Endothelial cell of umbilical vein (primary cell): ENCODE measurements at regions of chr12 and their contacts with region 1.

Region 1: GRCh38 chr12:25924491-25925463 is 33.7 kb upstream of the RASSF8 start:
- DNase-seq: peak; percentile 93
- H3K4me3 ChIP-seq: no peak overlapping the region
- H3K27ac ChIP-seq: peak overlapping the region; percentile 73
- H3K4me1 ChIP-seq: peaks cover 21% of the 10 kb centered on the region
- H3K27me3 ChIP-seq: no peaks in the 10 kb centered on the region
- CTCF ChIP-seq: peak in 1 of 2 donors; percentile 9
- POLR2A ChIP-seq: no peak

Region 2: GRCh38 chr12:25789541-25789944 is 135.2 kb before region 1 on chr12:
- CTCF ChIA-PET with region 1: no interaction called
- POLR2A ChIA-PET with region 1: no interaction called
- dilution Hi-C with region 1: no loop called
- intact Hi-C with region 1: loop called (anchors 5 kb)
- DNase-seq: peak; percentile 83
- H3K4me3 ChIP-seq: no peak overlapping the region
- H3K27ac ChIP-seq: no peak overlapping the region
- H3K4me1 ChIP-seq: peaks cover 49% of the 10 kb centered on the region
- H3K27me3 ChIP-seq: no peaks in the 10 kb centered on the region
- CTCF ChIP-seq: no peak
- POLR2A ChIP-seq: no peak

Region 3: GRCh38 chr12:25817166-25817565 is 107.6 kb before region 1 on chr12:
- CTCF ChIA-PET with region 1: no interaction called
- POLR2A ChIA-PET with region 1: no interaction called
- dilution Hi-C with region 1: no loop called
- intact Hi-C with region 1: loop called (anchors 5 kb)
- DNase-seq: no peak
- H3K4me3 ChIP-seq: no peak overlapping the region
- H3K27ac ChIP-seq: no peak overlapping the region
- H3K4me1 ChIP-seq: peaks cover 16% of the 10 kb centered on the region
- H3K27me3 ChIP-seq: no peaks in the 10 kb centered on the region
- CTCF ChIP-seq: no peak
- POLR2A ChIP-seq: no peak

Region 4: GRCh38 chr12:25840678-25841465 is 83.9 kb before region 1 on chr12:
- CTCF ChIA-PET with region 1: no interaction called
- POLR2A ChIA-PET with region 1: no interaction called
- dilution Hi-C with region 1: no loop called
- intact Hi-C with region 1: loop called (anchors 5 kb)
- DNase-seq: peak; percentile 81
- H3K4me3 ChIP-seq: no peak overlapping the region
- H3K27ac ChIP-seq: peak overlapping the region; percentile 44
- H3K4me1 ChIP-seq: peaks cover 18% of the 10 kb centered on the region
- H3K27me3 ChIP-seq: no peaks in the 10 kb centered on the region
- CTCF ChIP-seq: no peak
- POLR2A ChIP-seq: no peak

Region 5: DNA sequence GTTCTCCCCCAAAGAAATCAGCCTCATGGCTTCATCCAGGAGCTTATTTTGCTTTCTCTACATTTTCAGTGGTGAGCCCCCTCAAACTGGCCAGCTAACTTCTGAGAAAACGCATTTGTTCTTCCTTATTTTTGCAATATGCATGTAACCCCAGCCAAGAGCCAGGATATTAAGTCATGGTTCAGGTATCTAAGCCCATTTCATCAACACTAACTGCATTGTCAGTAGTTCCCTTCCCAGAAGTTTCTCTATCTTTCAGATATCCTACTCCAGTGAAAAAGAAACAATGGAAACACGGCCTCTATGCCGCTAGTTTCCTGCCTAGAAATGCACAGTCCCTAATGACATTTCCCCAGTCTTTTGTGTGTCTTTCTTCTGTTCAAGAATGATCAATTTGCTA is 69.1 kb before region 1 on chr12:
- CTCF ChIA-PET with region 1: no interaction called
- POLR2A ChIA-PET with region 1: no interaction called
- dilution Hi-C with region 1: no loop called
- intact Hi-C with region 1: loop called (anchors 5 kb)
- DNase-seq: peak; percentile 92
- H3K4me3 ChIP-seq: no peak overlapping the region
- H3K27ac ChIP-seq: peak overlapping the region; percentile 15
- H3K4me1 ChIP-seq: peaks cover 6% of the 10 kb centered on the region
- H3K27me3 ChIP-seq: no peaks in the 10 kb centered on the region
- CTCF ChIP-seq: no peak
- POLR2A ChIP-seq: no peak

Region 6: DNA sequence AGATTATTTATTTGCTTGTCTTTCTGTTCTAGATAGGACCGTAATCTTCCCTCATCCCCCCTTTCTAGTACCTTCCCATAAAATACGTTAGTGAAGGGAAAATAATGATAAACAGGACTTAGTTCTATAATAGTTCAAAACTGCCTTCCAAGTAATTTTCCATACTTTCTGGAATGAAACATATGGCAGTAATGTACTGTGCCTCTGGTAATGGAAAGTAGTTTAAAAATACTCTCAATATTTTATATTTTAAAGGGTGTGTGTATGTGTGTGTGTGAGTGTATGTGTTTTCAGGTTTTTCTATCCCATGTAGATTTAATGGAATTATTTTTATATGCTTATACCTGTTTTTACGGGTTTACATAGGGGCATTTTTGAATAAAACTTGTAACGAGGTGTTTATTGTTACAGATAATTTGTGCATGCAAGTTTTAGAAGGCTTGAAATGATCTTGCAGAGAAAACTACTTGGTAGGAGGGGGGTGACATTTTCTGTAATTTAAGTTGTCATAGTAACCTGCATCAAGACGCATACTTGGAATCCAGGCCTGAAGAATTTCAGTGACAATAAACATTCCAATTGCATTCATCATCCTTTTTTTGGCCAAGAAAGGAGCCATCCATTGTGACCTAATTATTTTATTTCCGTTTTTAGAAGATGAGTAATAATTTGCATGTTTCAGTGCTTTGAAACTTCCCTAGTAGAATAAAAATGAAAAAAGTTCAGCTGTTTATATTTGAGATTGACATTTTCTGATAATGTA is 72.6 kb after region 1 on chr12:
- CTCF ChIA-PET with region 1: no interaction called
- POLR2A ChIA-PET with region 1: no interaction called
- dilution Hi-C with region 1: no loop called
- intact Hi-C with region 1: loop called (anchors 1 kb)
- DNase-seq: peak; percentile 96
- H3K4me3 ChIP-seq: peak overlapping the region in 1 of 3 experiments; percentile 69
- H3K27ac ChIP-seq: peak overlapping the region; percentile 97
- H3K4me1 ChIP-seq: peaks cover 31% of the 10 kb centered on the region
- H3K27me3 ChIP-seq: no peaks in the 10 kb centered on the region
- CTCF ChIP-seq: no peak
- POLR2A ChIP-seq: no peak

Region 7: DNA sequence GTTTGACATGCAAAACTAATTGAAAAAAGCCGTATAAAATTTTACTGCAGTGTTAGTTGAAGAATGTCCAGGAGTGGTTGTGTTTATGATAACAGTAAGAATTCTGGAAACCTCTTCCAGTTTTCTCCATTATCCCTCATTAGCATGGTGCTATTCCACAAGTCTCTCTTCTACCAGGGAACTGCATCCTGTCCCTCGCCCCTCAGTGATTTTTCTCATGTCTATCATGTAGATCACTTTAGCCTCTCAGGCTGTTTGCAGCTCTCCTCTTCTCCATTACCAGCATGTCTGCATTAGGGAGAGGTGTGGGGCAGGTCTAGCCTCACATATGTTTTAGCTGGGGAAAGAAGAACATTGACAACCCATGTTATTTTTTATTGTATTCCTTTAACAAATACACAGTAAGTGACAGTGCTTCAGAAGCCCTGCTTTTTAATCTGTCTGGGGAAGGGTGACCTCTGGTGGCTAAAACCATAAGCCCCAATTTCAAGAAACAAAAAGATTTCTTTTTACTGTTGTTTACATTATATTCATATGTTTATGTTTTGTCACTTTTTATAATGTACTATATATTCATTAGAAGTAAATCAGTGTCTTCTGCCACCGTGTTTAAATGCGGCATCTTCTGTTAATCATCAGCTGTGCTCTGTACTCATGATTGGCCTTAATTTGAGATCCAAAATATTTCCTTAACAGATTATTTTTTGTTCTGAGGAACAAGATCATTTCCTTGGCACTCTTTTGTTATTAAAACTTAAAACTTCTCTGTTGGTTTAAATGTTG is 104.4 kb after region 1 on chr12:
- CTCF ChIA-PET with region 1: no interaction called
- POLR2A ChIA-PET with region 1: no interaction called
- dilution Hi-C with region 1: no loop called
- intact Hi-C with region 1: loop called (anchors 5 kb)
- DNase-seq: peak; percentile 78
- H3K4me3 ChIP-seq: no peak overlapping the region
- H3K27ac ChIP-seq: no peak overlapping the region
- H3K4me1 ChIP-seq: peaks cover 2% of the 10 kb centered on the region
- H3K27me3 ChIP-seq: no peaks in the 10 kb centered on the region
- CTCF ChIP-seq: peak; percentile 52 to 55
- POLR2A ChIP-seq: no peak